Calu3 (cell line): ENCODE measurements at regions of chr15 and their contacts with region 1.

Region 1: GRCh38 chr15:89416141-89416853 is 80.1 kb downstream of the RHCG start:
- DNase-seq: peak; percentile 91
- H3K4me3 Mint-ChIP-seq: no peak overlapping the region
- H3K27ac Mint-ChIP-seq: no peak overlapping the region
- H3K4me1 Mint-ChIP-seq: no peaks in the 10 kb centered on the region
- H3K27me3 Mint-ChIP-seq: peaks cover 100% of the 10 kb centered on the region
- CTCF ChIP-seq: peak; percentile 98

Region 2: GRCh38 chr15:89430530-89431341 is 14.4 kb after region 1 on chr15:
- CTCF ChIA-PET with region 1: interaction called, 12 read pairs
- intact Hi-C with region 1: loop called (anchors 1 kb)
- DNase-seq: peak; percentile 97
- H3K4me3 Mint-ChIP-seq: peak overlapping the region; percentile 73
- H3K27ac Mint-ChIP-seq: peak overlapping the region; percentile 89
- H3K4me1 Mint-ChIP-seq: peaks cover 25% of the 10 kb centered on the region
- H3K27me3 Mint-ChIP-seq: peaks cover 38% of the 10 kb centered on the region
- CTCF ChIP-seq: peak; percentile 99

Region 3: DNA sequence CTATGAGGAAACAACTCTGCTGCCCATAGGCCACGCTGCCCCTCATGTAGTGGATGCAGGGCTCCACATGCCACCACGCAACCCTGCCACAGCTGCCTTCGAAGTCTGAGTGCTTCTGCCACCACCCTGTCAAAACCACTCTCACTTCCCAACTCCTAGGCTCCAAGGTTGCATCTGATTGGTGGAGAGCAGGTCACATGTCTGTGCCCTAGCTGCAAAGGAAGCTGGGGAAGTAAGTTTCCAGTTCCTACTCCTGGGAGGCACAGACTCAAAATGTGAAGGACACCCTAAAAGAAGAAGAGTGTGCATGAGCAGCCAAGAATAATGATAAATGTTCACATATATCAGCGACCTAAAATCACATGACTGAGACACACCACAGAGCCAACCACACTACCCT is 127.1 kb after region 1 on chr15:
- CTCF ChIA-PET with region 1: no interaction called
- intact Hi-C with region 1: no loop called
- DNase-seq: no peak
- H3K4me3 Mint-ChIP-seq: no peak overlapping the region
- H3K27ac Mint-ChIP-seq: no peak overlapping the region
- H3K4me1 Mint-ChIP-seq: no peaks in the 10 kb centered on the region
- H3K27me3 Mint-ChIP-seq: peaks cover 53% of the 10 kb centered on the region
- CTCF ChIP-seq: no peak